PC-9 (cell line): ENCODE measurements at regions of chr1 and their contacts with region 1.

Region 1: DNA sequence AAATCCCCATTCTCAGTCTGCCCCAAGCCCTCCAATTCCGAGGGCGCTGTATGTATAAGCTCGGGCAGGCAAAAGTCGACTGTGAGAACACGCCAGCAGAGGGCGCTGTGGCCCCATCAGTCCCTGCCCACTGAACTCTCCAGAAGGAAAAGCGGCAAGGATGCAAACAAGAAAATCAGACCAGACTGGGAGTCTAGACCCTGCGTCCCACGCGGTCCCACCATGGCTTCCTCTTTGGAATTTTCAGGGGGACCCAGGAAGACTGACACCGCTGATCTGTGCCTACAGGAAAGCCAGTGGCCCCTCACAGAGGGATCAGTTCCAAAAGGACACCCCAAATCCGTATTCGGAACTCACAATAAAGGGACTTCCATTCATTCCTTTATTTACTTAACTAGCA is 19.5 kb downstream of the TEX35 start:
- DNase-seq: peak; percentile 60 to 79
- H3K4me3 ChIP-seq: no peak overlapping the region
- H3K27ac ChIP-seq: no peak overlapping the region
- H3K4me1 ChIP-seq: peaks cover 56% of the 10 kb centered on the region
- H3K27me3 ChIP-seq: no peaks in the 10 kb centered on the region
- CTCF ChIP-seq: peak; percentile 95

Region 2: GRCh38 chr1:177948336-177948972 is 583.9 kb before region 1 on chr1:
- CTCF ChIA-PET with region 1: no interaction called
- POLR2A ChIA-PET with region 1: no interaction called
- intact Hi-C with region 1: loop called (anchors 1 kb)
- DNase-seq: peak; percentile 60 to 63
- H3K4me3 ChIP-seq: no peak overlapping the region
- H3K27ac ChIP-seq: no peak overlapping the region
- H3K4me1 ChIP-seq: no peaks in the 10 kb centered on the region
- H3K27me3 ChIP-seq: no peaks in the 10 kb centered on the region
- CTCF ChIP-seq: peak; percentile 94

Region 3: DNA sequence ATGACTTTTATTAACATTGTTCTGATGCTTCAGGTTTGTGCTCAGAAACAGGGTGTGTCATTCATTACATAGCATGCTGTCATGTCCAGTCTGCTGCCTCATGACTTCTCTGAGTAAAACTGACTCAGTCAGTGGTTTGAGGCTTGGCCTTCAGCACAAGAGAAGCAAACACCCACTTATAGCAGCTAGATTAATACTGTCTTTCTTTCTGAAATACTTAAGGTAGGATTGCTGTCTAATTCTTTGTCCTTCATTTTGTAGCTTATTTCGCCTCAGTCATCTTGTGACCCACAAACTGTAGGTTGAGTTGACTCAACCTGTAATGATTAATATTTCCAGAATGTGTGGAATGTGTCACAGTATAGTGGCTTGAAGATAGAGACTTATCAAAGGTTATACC is 405.6 kb before region 1 on chr1:
- CTCF ChIA-PET with region 1: no interaction called
- POLR2A ChIA-PET with region 1: no interaction called
- intact Hi-C with region 1: loop called (anchors 10 kb)
- DNase-seq: peak; percentile 55 to 92
- H3K4me3 ChIP-seq: peak overlapping the region; percentile 9; the same call in 1 of the 2 replicates
- H3K27ac ChIP-seq: peak overlapping the region; percentile 90
- H3K4me1 ChIP-seq: peaks cover 45% of the 10 kb centered on the region
- H3K27me3 ChIP-seq: no peaks in the 10 kb centered on the region
- CTCF ChIP-seq: no peak

Region 4: DNA sequence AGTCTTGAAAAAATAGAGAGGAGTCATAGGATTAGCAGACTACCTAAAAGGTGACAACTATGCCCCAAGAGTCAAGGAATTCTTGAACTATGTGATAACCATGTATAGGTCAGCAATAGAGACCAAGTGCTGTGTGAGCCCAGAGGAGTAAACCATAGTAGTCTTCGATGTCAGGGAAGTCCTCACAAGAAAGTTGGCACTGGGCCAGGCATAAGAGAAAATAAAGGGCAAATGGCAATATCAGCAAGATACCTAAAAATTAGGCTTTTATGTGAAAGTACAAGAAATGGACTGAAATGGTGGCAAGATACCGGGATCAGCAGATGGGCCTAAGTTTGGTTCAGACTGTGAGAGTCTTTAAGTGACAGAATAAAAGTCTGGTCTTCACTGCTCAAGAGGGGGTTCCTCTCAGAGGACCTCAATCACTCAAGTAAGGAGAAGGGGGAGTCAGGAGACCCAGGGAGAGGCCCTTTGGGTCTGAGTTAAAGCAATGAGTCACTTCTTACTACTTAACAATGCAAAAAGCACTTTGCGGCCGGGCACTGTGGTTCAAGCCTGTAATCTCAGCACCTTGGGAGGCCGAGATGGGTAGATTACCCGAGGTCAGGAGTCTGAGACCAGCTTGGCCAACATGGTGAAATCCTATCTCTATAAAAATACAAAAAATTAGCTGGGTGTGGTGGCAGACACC is 75.5 kb after region 1 on chr1:
- CTCF ChIA-PET with region 1: interaction called, 14 read pairs
- POLR2A ChIA-PET with region 1: no interaction called
- intact Hi-C with region 1: no loop called
- DNase-seq: no peak
- H3K4me3 ChIP-seq: no peak overlapping the region
- H3K27ac ChIP-seq: peak overlapping the region; percentile 92
- H3K4me1 ChIP-seq: peaks cover 44% of the 10 kb centered on the region
- H3K27me3 ChIP-seq: no peaks in the 10 kb centered on the region
- CTCF ChIP-seq: no peak

Region 5: GRCh38 chr1:179081687-179082332 is 549.4 kb after region 1 on chr1 and contains the start of gene TOR3A:
- CTCF ChIA-PET with region 1: no interaction called
- POLR2A ChIA-PET with region 1: no interaction called
- intact Hi-C with region 1: loop called (anchors 2 kb)
- DNase-seq: peak; percentile 87 to 96
- H3K4me3 ChIP-seq: peak within 1 kb of the TSS; percentile 79
- H3K27ac ChIP-seq: peak within 1 kb of the TSS; percentile 76
- H3K4me1 ChIP-seq: peaks cover 28% of the 10 kb centered on the region
- H3K27me3 ChIP-seq: no peaks in the 10 kb centered on the region
- CTCF ChIP-seq: no peak
- total RNA-seq, gene TOR3A: 31.6 and 35.6 TPM in 2 replicates

Region 6: GRCh38 chr1:179229214-179230140 is 697.1 kb after region 1 on chr1 and contains the start of gene ABL2:
- CTCF ChIA-PET with region 1: no interaction called
- POLR2A ChIA-PET with region 1: no interaction called
- intact Hi-C with region 1: loop called (anchors 5 kb)
- DNase-seq: peak; percentile 39
- H3K4me3 ChIP-seq: peak within 1 kb of the TSS; percentile 96
- H3K27ac ChIP-seq: peak within 1 kb of the TSS; percentile 55
- H3K4me1 ChIP-seq: peaks cover 36% of the 10 kb centered on the region
- H3K27me3 ChIP-seq: no peaks in the 10 kb centered on the region
- CTCF ChIP-seq: no peak
- total RNA-seq, gene ABL2: 23.5 and 27.4 TPM in 2 replicates

Region 7: GRCh38 chr1:179599623-179600249 is 1067.3 kb after region 1 on chr1:
- CTCF ChIA-PET with region 1: no interaction called
- POLR2A ChIA-PET with region 1: no interaction called
- intact Hi-C with region 1: loop called (anchors 10 kb)
- DNase-seq: peak; percentile 17 to 49
- H3K4me3 ChIP-seq: no peak overlapping the region
- H3K27ac ChIP-seq: no peak overlapping the region
- H3K4me1 ChIP-seq: no peaks in the 10 kb centered on the region
- H3K27me3 ChIP-seq: no peaks in the 10 kb centered on the region
- CTCF ChIP-seq: peak; percentile 66